ENCODE measurements at regions of chr3 and their contacts with region 1.

Region 1: DNA sequence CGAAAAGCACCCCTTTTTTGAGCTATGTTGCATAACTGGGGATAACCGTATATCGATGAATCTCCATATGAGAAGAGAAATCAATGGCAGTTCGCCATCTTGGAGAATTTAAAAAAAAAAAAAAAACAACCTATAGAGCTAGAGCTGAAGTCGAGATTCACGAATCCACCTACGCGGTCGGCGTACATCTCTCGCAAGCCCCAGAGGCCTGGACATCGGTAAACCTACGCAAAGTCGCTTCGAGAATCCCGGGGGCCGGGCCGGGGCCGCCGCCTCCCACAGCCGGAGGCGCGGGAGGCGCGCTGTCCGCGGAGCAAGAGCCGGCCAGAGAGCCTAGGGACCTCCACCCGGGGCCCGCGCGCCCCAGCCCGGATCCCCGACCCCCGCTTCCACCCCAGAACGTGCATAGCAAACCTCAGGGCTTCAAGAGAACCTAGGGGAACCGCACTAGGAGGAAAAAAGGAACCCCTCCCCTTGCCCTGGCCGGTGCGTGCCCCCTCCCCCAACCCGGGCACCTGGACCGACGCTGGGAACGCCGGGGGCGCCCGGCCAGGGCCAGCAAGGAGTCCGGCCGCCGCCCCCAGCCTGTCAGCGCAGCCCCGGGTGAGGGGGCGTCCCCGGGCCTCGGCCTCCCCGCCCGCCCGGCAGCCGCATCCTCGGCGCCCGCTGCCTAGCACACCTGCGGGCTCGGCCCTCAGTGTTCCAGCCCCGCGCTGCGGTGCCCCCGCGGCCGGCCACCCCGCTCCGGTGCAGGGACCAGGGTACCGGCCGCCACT is 567 bp downstream of the PFN2 start:
- DNase-seq: peak; percentile 90
- ATAC-seq: peak; percentile 46
- H3K4me3 ChIP-seq: peak overlapping the region; percentile 95
- H3K27ac ChIP-seq: peak overlapping the region; percentile 93
- H3K4me1 ChIP-seq: peaks cover 5% of the 10 kb centered on the region
- H3K27me3 ChIP-seq: no peaks in the 10 kb centered on the region
- CTCF ChIP-seq: no peak
- POLR2A ChIP-seq: no peak
- RAD21 ChIP-seq: no peak

Region 2: GRCh38 chr3:149879872-149880271 is 90.3 kb before region 1 on chr3:
- CTCF ChIA-PET with region 1: no interaction called
- POLR2A ChIA-PET with region 1: no interaction called
- dilution Hi-C with region 1: no loop called
- in situ Hi-C with region 1: no loop called
- intact Hi-C with region 1: loop called (anchors 1 kb)
- DNase-seq: peak; percentile 68
- ATAC-seq: peak; percentile 98
- H3K4me3 ChIP-seq: no peak overlapping the region
- H3K27ac ChIP-seq: no peak overlapping the region
- H3K4me1 ChIP-seq: no peaks in the 10 kb centered on the region
- H3K27me3 ChIP-seq: no peaks in the 10 kb centered on the region
- CTCF ChIP-seq: peak; percentile 62
- POLR2A ChIP-seq: no peak
- RAD21 ChIP-seq: peak; percentile 55

Region 3: GRCh38 chr3:150079029-150079739 is 109.1 kb after region 1 on chr3:
- CTCF ChIA-PET with region 1: no interaction called
- POLR2A ChIA-PET with region 1: no interaction called
- dilution Hi-C with region 1: no loop called
- in situ Hi-C with region 1: no loop called
- intact Hi-C with region 1: loop called (anchors 2 kb)
- DNase-seq: peak; percentile 95
- ATAC-seq: peak; percentile 79
- H3K4me3 ChIP-seq: no peak overlapping the region
- H3K27ac ChIP-seq: peak overlapping the region; percentile 49
- H3K4me1 ChIP-seq: peaks cover 21% of the 10 kb centered on the region
- H3K27me3 ChIP-seq: no peaks in the 10 kb centered on the region
- CTCF ChIP-seq: no peak
- POLR2A ChIP-seq: no peak
- RAD21 ChIP-seq: no peak; the same call in 1 of the 2 replicates

Region 4: DNA sequence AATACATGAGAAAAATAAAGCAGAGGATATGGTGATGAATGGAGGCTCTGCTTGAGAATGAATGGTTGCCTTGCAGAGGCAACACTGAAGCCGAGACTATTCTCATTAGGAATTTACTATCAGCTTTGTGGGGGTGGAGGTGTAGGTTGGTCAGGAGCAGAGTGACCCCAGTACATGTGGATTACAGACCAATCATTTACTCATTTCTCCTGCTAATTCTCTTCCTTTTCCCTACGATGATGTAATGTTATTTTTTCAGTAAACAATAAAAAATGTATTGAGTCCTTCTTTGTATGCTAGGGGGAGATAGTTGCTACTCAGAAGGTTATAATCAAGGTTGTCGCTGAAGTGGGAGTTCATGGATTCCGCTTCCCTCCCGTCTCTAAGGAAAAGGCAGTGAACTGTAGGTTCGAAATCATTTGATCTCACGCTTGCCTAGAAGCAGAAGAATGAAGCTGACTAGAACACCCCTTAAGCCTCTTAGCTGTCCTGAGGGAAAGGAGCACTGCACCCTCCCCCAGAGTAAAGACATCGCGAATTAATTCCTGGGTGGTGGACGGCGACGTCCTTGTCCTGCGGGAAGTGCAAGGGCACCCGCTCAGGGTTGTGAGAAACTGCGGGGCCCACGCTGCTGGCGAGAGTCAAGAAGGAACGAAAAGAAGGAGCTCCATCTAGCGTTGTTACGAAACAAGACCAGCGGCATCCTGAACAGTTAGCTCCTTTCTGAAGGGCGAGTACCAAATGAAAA is 213.7 kb after region 1 on chr3:
- CTCF ChIA-PET with region 1: interaction called, 16 read pairs
- POLR2A ChIA-PET with region 1: interaction called, 17 read pairs
- dilution Hi-C with region 1: no loop called
- in situ Hi-C with region 1: loop called (anchors 5 kb)
- intact Hi-C with region 1: loop called (anchors 1 kb)
- DNase-seq: peak; percentile 83
- ATAC-seq: peak; percentile 97
- H3K4me3 ChIP-seq: peak overlapping the region; percentile 32
- H3K27ac ChIP-seq: peak overlapping the region; percentile 36; the same call in 1 of the 2 replicates
- H3K4me1 ChIP-seq: peaks cover 2% of the 10 kb centered on the region; the same call in 1 of the 2 replicates
- H3K27me3 ChIP-seq: no peaks in the 10 kb centered on the region
- CTCF ChIP-seq: peak; percentile 80
- POLR2A ChIP-seq: no peak
- RAD21 ChIP-seq: peak; percentile 91

Region 5: GRCh38 chr3:150216041-150216811 is 246.1 kb after region 1 on chr3:
- CTCF ChIA-PET with region 1: interaction called, 6 read pairs
- POLR2A ChIA-PET with region 1: interaction called, 3 read pairs
- dilution Hi-C with region 1: no loop called
- in situ Hi-C with region 1: no loop called
- intact Hi-C with region 1: loop called (anchors 1 kb)
- DNase-seq: peak; percentile 61
- ATAC-seq: peak; percentile 50
- H3K4me3 ChIP-seq: no peak overlapping the region
- H3K27ac ChIP-seq: peak overlapping the region; percentile 49; the same call in 1 of the 2 replicates
- H3K4me1 ChIP-seq: peaks cover 6% of the 10 kb centered on the region
- H3K27me3 ChIP-seq: peaks cover under 1% of the 10 kb centered on the region; the same call in 1 of the 2 replicates
- CTCF ChIP-seq: no peak
- POLR2A ChIP-seq: no peak
- RAD21 ChIP-seq: no peak; the same call in 1 of the 2 replicates

Region 6: DNA sequence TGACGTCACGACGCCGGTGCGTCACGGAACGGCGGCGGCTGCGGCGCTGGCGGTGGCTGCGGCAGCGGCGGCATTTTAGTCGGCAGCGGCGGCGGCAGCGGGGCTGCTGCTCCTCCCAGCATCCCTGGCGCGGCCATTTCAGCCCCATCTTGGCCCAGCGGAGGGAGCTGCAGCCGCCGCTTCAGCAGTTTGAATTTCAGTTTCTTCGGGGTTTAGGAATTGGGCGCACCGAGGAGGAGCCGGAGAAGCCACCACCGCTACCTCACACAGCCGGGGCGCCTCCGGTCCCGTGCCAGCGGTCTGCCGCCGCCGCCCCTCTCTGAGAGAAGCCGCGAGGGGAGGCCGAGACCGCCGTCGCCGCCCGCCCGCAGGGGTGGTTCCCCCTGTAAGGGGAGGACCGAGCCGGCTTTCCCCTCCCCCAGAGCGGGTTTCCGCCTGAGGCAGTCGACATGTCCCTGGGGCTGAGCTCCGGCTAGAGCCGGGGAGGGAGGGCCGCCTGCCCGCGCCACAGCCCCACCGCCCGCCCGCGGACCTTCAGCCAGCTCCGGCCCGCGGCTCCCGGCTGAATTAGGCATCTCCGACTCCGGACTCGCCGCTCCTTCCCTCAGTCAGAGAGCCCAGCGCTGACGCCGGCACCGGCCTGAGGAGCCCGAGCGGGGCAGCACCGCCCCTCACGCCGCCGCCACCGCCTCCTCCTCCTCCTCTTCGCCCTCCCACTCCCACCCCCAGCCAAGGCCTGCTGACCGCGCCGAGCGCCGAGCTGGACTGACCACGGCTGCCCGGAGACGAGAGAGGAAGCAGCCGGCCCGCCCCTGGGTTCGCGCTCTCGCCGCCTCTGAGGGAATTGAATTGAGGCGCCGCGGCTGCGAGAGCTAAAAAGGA is 438.3 kb after region 1 on chr3 and contains the start of gene TSC22D2:
- CTCF ChIA-PET with region 1: no interaction called
- POLR2A ChIA-PET with region 1: no interaction called
- dilution Hi-C with region 1: no loop called
- in situ Hi-C with region 1: no loop called
- intact Hi-C with region 1: loop called (anchors 1 kb)
- DNase-seq: peak; percentile 92
- ATAC-seq: peak; percentile 81
- H3K4me3 ChIP-seq: peak within 1 kb of the TSS; percentile 76
- H3K27ac ChIP-seq: peak within 1 kb of the TSS; percentile 97
- H3K4me1 ChIP-seq: no peaks in the 10 kb centered on the region
- H3K27me3 ChIP-seq: no peaks in the 10 kb centered on the region
- CTCF ChIP-seq: peak; percentile 31
- POLR2A ChIP-seq: peak; percentile 94
- RAD21 ChIP-seq: no peak; the same call in 1 of the 2 replicates
- total RNA-seq, gene TSC22D2: 12.2 and 15.8 TPM in 2 replicates

Region 7: GRCh38 chr3:150528354-150528797 is 558.2 kb after region 1 on chr3:
- CTCF ChIA-PET with region 1: no interaction called
- POLR2A ChIA-PET with region 1: no interaction called
- dilution Hi-C with region 1: no loop called
- in situ Hi-C with region 1: no loop called
- intact Hi-C with region 1: loop called (anchors 10 kb)
- DNase-seq: peak; percentile 52
- ATAC-seq: peak; percentile 63
- H3K4me3 ChIP-seq: no peak overlapping the region
- H3K27ac ChIP-seq: no peak overlapping the region
- H3K4me1 ChIP-seq: no peaks in the 10 kb centered on the region
- H3K27me3 ChIP-seq: no peaks in the 10 kb centered on the region
- CTCF ChIP-seq: peak; percentile 51
- POLR2A ChIP-seq: no peak
- RAD21 ChIP-seq: peak; percentile 48